Heart right ventricle (tissue), 16 donors: ENCODE measurements at regions of chr5 and their contacts with region 1.

Region 1: DNA sequence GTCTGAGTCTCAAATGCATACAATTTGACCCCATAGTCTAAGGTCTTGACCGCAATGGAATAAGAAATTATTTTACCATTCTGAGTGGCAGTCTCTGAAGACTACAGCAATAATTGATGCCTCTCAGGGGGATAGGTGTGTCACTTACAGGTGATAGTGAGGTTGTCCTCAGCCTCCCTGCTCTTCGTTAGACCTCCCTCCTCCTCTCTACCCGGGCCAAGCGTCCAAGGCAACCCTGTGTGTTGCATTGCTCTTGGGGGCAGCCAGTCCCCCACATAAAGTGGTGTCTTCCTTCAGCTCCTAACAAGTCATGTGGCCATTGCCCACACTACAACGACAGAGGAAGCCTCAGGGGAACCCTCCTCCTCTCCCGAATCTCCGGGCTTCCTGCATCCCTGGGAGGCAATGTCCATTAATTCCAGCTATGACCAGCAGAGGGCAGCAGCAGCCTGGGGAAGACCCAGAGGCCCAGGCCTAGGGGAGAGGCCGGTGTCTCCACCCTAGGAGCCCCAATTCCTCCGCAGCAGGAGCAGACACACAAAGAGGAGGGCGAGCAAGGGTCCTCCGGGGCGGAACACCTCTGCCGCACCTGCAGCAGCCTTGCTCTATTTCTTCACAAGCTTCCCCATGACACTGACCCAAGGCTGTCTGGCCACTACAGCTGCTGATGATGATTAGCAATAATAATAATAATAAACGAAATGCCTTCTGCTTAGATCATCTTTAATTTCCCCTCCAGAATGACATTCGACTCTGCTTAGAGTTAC is 134.8 kb downstream of the KCNIP1 start:
- DNase-seq: peak; percentile 61 to 69
- ATAC-seq: peak; percentile 46 to 76 (median 64)
- H3K4me3 ChIP-seq: no peak overlapping the region
- H3K27ac ChIP-seq: no peak overlapping the region
- H3K4me1 ChIP-seq: peaks cover 0 to 26% (median 11%) of the 10 kb centered on the region in 9 donors
- H3K27me3 ChIP-seq: no peaks in the 10 kb centered on the region
- CTCF ChIP-seq: peak; percentile 71 to 94 (median 87)

Region 2: DNA sequence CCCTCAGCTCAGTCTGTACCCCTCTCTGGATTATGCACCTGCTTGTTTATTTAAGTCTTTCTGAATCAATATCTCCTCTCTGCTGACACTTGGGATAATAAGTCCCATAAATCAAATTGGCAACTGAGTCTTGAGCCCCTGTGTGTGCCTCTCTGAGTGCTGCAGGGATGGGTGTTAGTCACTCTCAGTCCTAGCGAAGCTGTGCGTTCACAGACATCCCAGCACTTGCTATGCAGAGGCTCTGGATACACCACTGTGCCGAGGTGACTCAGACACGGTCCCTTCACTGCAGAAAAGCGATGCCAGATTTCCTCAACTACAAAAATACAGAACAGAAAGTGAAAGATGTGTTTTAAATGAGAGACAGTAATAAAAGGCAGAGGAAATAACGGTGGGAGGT is 245.4 kb before region 1 on chr5:
- intact Hi-C with region 1: no loop called
- DNase-seq: no peak
- ATAC-seq: no peak
- H3K4me3 ChIP-seq: no peak overlapping the region
- H3K27ac ChIP-seq: peak overlapping the region in 1 of 10 donors; percentile 19
- H3K4me1 ChIP-seq: peaks cover 0 to 33% (median 15%) of the 10 kb centered on the region in 9 donors
- H3K27me3 ChIP-seq: peaks cover 0 to 5% (median 0%) of the 10 kb centered on the region in 7 donors
- CTCF ChIP-seq: no peak

Region 3: DNA sequence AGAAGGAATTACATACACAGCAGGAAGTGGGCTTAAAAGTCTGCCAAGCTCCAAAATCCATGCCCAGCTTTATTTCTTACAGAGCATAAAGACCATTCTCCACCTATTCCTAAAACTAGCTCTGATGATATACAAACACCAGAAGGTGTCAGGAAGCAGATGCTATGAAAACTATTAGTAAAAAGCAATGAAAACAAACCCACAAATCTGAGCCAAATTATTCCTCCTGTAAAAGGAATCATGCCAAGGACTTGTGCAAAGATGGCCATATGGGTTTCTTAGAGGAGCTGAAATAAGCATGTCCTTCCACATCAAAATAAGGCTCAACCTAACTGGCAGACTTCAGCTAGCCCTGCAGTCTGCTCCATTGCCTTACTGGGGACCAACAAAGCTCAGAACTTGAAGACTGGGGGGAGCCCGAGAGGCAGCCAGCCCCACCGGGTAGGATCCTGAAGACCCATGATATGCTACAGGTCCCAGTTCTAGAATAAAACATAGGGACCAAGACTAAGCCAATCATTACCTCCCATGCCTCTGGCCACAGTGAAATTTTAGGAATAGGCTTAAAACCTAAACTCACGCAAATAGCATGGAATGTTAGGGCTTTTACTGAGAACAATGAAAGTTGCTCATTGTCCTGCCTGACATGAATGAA is 102.0 kb after region 1 on chr5:
- intact Hi-C with region 1: loop called in 3 of 10 experiments (anchors 2 to 5 kb)
- DNase-seq: no peak
- ATAC-seq: no peak
- H3K4me3 ChIP-seq: no peak overlapping the region
- H3K27ac ChIP-seq: no peak overlapping the region
- H3K4me1 ChIP-seq: peaks cover 7 to 21% (median 17%) of the 10 kb centered on the region in 9 donors
- H3K27me3 ChIP-seq: peaks cover 0 to 19% (median 0%) of the 10 kb centered on the region in 7 donors
- CTCF ChIP-seq: no peak

Region 4: DNA sequence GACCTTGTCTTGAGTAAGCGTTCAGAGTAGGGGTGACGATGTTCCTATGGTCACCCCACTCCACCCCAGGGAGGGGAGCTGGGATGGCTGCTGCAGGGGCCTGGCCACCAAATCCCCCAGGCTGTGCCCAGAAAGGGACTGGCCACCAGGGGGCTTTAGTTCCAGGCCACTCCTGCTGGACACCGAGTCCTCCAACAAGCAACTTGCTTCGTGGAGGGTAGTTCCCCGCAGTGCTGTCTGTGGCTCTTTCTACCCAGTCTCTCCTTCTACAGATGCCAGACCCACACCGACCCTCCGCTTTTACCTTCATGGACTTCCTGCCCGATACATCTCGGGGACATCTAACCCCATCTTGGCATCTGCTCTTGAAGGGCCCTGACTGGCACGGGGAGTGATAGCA is 109.2 kb after region 1 on chr5:
- intact Hi-C with region 1: loop called in 3 of 10 experiments (anchors 2 to 5 kb)
- DNase-seq: peak; percentile 25 to 40
- ATAC-seq: peak in 7 of 8 donors; percentile 2 to 47 (median 18)
- H3K4me3 ChIP-seq: no peak overlapping the region
- H3K27ac ChIP-seq: peak overlapping the region; percentile 46 to 92 (median 86)
- H3K4me1 ChIP-seq: peaks cover 18 to 87% (median 71%) of the 10 kb centered on the region in 9 donors
- H3K27me3 ChIP-seq: peaks cover 0 to 21% (median 0%) of the 10 kb centered on the region in 7 donors
- CTCF ChIP-seq: peak in 8 of 9 donors; percentile 23 to 64 (median 52)